ENCODE measurements at regions of chr9 and their contacts with region 1.

Region 1: DNA sequence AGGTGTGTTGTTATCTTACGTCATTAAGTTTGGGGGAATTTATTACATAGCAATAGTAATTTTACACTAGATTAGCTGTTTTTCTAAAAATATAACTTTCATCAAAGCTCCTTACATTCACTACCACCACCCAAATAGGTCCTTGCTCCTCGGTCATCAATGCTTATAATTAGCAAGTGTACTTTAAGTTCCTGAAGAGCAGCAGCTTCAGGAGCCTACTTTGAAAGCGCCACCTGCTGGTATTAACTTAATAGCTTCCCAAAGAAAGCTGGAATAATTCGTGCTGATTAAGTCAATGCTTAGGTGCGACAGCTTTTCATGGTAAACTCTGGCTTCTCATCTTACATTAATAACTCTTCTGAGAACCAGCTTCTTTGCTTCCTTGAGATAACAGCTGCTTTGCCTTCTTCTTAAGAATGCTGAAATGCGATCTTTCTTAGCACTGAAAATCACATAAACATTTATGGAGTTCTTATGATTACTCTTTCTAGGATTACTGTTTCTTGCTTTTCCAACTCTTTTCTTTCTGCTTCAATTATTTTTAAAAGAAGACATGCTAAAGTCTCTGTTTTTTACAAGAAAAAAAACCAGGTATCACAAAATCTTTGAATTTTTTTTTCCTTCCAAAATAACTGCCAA is 10.0 kb upstream of the C5 start:
- DNase-seq: peak; percentile 80
- H3K4me3 ChIP-seq: no peak overlapping the region
- H3K27ac ChIP-seq: no peak overlapping the region
- H3K27me3 ChIP-seq: no peaks in the 10 kb centered on the region
- CTCF ChIP-seq: peak; percentile 81

Region 2: DNA sequence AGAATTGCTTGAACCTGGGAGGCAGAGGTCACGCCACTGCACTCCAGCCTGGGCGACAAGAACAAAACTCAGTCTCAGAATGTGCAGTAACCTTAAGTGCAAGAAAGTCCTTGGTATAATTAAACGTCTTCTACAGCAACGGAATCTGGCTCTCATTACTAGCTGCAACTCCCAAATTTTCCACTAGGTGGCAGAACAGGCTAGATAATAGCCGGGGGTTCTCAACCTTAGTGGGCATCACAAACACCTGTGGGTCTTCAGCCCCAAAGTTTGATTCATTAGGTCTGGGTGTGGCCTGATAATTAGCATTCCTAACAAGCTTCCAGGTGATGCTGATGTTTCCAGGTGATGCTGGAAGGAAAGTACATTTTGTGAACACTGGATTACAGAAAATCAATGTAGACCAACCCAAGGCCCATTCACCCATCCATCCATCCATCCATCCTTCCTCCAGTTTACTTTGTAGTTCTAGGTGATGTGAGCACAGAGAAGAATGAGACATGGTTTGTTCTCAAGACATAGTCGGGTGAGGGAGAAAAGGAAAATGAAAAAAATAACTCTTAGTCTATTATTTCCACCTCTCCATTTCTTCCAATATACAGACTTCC is 304.2 kb before region 1 on chr9:
- CTCF ChIA-PET with region 1: interaction called, 46 read pairs
- POLR2A ChIA-PET with region 1: no interaction called
- DNase-seq: no peak
- H3K4me3 ChIP-seq: no peak overlapping the region
- H3K27ac ChIP-seq: no peak overlapping the region
- H3K27me3 ChIP-seq: no peaks in the 10 kb centered on the region
- CTCF ChIP-seq: peak; percentile 83

Region 3: GRCh38 chr9:120978987-120979386 is 81.1 kb before region 1 on chr9:
- CTCF ChIA-PET with region 1: interaction called, 155 read pairs
- POLR2A ChIA-PET with region 1: no interaction called
- DNase-seq: no peak
- H3K4me3 ChIP-seq: no peak overlapping the region
- H3K27ac ChIP-seq: no peak overlapping the region
- H3K27me3 ChIP-seq: no peaks in the 10 kb centered on the region
- CTCF ChIP-seq: no peak

Region 4: GRCh38 chr9:121021301-121021700 is 38.8 kb before region 1 on chr9:
- CTCF ChIA-PET with region 1: interaction called, 10 read pairs
- POLR2A ChIA-PET with region 1: no interaction called
- DNase-seq: no peak
- H3K4me3 ChIP-seq: no peak overlapping the region
- H3K27ac ChIP-seq: no peak overlapping the region
- H3K27me3 ChIP-seq: no peaks in the 10 kb centered on the region
- CTCF ChIP-seq: no peak

Region 5: GRCh38 chr9:121048618-121049017 is 11.5 kb before region 1 on chr9:
- CTCF ChIA-PET with region 1: interaction called, 77 read pairs
- POLR2A ChIA-PET with region 1: no interaction called
- DNase-seq: no peak
- H3K4me3 ChIP-seq: no peak overlapping the region
- H3K27ac ChIP-seq: no peak overlapping the region
- H3K27me3 ChIP-seq: no peaks in the 10 kb centered on the region
- CTCF ChIP-seq: no peak

Region 6: GRCh38 chr9:121082075-121082474 is 22.0 kb after region 1 on chr9:
- CTCF ChIA-PET with region 1: interaction called, 20 read pairs
- POLR2A ChIA-PET with region 1: no interaction called
- DNase-seq: no peak
- H3K4me3 ChIP-seq: no peak overlapping the region
- H3K27ac ChIP-seq: no peak overlapping the region
- H3K27me3 ChIP-seq: no peaks in the 10 kb centered on the region
- CTCF ChIP-seq: no peak

Region 7: DNA sequence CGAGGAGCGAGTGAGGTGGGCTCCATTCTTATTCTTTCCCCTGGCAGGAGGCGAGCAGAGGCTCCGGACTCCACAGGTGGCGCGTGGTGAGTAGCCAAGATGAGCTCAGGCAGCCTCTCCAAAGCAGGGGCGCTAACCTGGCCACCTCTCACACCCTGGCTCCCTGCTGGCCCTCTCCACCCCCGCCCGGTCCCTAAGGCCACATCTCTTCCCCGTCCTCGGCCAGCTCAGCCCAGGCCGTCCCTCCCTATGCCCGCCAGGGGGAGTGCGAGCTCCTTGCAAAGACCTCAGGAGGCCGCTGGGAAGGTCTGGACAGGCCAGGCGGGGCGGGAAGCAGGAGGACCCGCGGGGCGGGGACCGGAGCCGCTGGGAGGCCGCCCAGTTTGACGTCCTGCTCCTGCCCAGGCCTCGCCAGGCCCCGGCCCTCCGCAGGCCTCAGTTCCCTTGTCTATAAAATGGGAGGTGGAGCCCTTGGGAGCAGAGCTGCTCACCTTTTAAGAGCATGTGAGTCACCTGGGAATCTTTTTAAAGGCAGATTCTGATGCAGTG is 485.8 kb after region 1 on chr9:
- CTCF ChIA-PET with region 1: no interaction called
- POLR2A ChIA-PET with region 1: no interaction called
- DNase-seq: peak; percentile 89
- H3K4me3 ChIP-seq: peak overlapping the region; percentile 27
- H3K27ac ChIP-seq: no peak overlapping the region
- H3K27me3 ChIP-seq: peaks cover 9% of the 10 kb centered on the region
- CTCF ChIP-seq: peak; percentile 94

Measured in AG04450 (cell line).